ENCODE measurements at regions of chr10 and their contacts with region 1.

Region 1: DNA sequence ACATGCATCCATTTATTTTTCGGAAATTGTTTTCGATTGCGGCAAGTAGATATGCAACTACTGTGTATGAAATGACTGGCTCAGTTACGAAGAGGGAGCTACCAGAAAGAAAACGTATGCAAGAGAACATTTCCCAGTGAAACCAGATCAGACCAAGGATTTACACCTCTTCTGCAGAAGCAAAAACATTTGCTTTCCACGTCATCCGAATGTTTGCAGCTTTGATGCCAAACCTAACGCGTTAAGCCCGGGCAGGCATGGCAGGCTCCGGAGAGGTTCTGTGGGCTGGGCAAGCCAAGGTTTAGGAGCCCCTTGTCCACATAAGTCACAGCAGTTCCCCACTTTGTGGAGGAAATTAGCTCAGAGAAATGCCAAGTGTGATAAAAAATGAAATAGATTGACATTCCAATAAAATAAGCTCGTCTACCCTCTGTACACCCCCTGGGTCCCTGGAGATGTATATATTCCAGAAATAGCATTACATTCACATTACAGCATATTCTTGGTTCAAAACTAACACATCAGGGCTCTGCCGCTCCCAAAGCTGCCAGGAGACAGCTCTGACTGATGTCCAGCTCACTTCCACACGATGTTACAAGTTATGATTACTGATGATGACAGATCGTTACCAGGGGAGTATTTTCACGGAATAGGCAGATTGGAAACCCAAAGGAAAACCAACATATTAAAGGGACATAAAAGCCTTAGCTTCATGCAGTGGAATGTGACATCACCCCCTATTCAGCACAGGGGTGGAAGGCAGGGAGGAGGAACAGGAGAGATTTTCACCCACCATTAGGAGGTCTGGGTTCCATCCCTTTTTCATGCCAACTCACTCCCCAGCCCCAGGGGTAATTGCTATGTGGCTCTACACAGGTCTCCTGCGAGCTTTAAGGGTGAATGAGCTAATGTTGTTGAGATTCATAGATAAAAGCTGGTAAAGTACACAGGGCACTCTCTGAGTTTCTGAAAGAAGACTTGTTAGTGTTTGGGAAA is 81.5 kb downstream of the LYZL1 start:
- DNase-seq: no peak
- H3K4me3 ChIP-seq: no peak overlapping the region
- CTCF ChIP-seq: no peak

Region 2: DNA sequence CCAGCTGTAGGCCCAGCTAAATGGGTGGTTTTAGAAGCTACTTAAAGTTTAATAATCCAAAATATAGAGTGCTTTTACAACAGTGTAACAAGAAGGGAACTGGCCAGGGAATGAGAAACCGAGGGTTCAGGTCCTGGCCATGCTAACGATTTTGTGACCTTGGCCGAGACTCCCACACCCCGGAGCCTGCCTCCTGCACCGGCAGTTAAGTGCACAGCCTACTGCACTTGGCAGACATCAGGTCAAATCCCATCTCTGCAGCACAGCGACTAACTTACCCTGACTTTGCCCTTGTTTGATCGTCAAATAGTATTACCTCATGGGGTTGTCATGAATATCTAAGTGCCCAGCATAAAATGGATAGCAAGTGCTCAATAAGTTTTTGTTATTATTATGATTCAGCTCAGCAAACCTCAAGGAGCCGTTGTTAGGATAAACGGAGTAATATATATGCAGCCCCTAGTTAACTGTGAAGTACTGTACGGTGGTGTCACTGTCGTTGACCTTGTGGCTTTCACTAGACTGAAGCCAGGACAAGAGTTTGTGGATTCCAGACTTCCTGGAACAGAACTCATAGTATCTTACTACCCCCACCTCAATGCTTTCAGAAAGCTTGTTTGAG is 46.1 kb before region 1 on chr10:
- CTCF ChIA-PET with region 1: no interaction called
- POLR2A ChIA-PET with region 1: no interaction called
- DNase-seq: no peak
- H3K4me3 ChIP-seq: no peak overlapping the region
- CTCF ChIP-seq: no peak

Region 3: GRCh38 chr10:29386342-29386999 is 16.1 kb after region 1 on chr10:
- CTCF ChIA-PET with region 1: interaction called, 22 read pairs
- POLR2A ChIA-PET with region 1: no interaction called
- DNase-seq: no peak
- H3K4me3 ChIP-seq: no peak overlapping the region
- CTCF ChIP-seq: peak; percentile 43